Heart right ventricle (tissue), 16 donors: ENCODE measurements at regions of chrX and their contacts with region 1.

Region 1: DNA sequence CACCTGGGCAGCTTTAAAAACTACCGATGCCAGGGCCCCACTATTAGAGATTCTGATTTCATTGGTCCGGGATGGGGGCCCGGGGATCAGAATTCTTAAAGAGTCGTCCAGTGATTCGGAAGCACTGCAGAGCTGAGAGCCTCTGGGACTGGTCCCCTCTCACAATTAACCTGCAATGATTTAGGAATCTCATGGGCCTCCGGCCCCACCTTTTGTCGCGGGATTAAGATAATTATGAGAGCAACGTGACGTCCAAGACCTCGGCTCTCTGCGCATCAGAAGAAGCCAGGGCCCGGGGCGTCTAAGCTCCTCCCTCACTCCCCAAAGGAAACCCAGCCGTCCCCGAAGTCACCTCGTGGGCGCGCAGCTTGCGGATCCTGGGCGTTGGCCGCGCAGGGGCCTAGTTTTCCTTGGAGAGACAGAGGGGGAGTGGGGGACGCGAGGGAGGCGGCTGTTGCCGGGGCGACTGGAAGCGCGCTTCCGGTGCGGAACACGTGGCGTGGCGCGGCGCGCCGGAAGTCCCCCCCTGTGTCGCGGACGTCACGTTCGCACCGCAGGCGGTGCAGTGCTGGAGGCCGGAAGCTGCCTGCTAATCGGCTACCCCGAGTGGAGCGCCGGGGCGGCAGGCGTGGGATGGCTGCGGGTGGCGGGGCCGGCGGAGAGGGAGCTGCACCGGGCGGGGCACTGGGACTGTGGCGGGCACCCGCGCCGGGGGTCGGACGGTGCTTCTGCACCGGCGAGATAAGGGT is at the start of gene GEMIN8:
- DNase-seq: peak; percentile 86
- ATAC-seq: peak; percentile 97 to 99 (median 98)
- H3K4me3 ChIP-seq: peak within 1 kb of the TSS; percentile 50 to 85 (median 72)
- H3K27ac ChIP-seq: peak within 1 kb of the TSS; percentile 55 to 90 (median 84)
- H3K4me1 ChIP-seq: peaks cover 0 to 31% (median 15%) of the 10 kb centered on the region in 9 donors
- H3K27me3 ChIP-seq: peaks cover 0 to 50% (median 0%) of the 10 kb centered on the region in 7 donors
- CTCF ChIP-seq: no peak
- total RNA-seq, gene GEMIN8: 8.2 to 16.7 (median 12.8) TPM

Region 2: GRCh38 chrX:12946838-12947544 is 1082.6 kb before region 1 on chrX:
- intact Hi-C with region 1: loop called in 1 of 10 experiments (anchors 5 kb)
- DNase-seq: peak in 1 of 2 donors; percentile 69
- ATAC-seq: peak; percentile 49 to 86 (median 74)
- H3K4me3 ChIP-seq: no peak overlapping the region
- H3K27ac ChIP-seq: peak overlapping the region in 8 of 10 donors; percentile 15 to 83 (median 64)
- H3K4me1 ChIP-seq: peaks cover 0 to 56% (median 12%) of the 10 kb centered on the region in 9 donors
- H3K27me3 ChIP-seq: peaks cover 0 to 25% (median 0%) of the 10 kb centered on the region in 7 donors
- CTCF ChIP-seq: peak; percentile 64 to 97 (median 84)

Region 3: GRCh38 chrX:13506574-13506973 is 523.0 kb before region 1 on chrX:
- intact Hi-C with region 1: loop called in 9 of 10 experiments (anchors 2 to 10 kb)
- DNase-seq: peak; percentile 18
- ATAC-seq: no peak
- H3K4me3 ChIP-seq: no peak overlapping the region
- H3K27ac ChIP-seq: no peak overlapping the region
- H3K4me1 ChIP-seq: peaks cover 0 to 4% (median 0%) of the 10 kb centered on the region in 9 donors
- H3K27me3 ChIP-seq: peaks cover 0 to 38% (median 0%) of the 10 kb centered on the region in 7 donors
- CTCF ChIP-seq: peak; percentile 54 to 84 (median 71)

Region 4: GRCh38 chrX:13658602-13659001 is 371.0 kb before region 1 on chrX:
- intact Hi-C with region 1: loop called in 8 of 10 experiments (anchors 2 to 10 kb)
- DNase-seq: peak in 1 of 2 donors; percentile 11
- ATAC-seq: peak in 2 of 8 donors; percentile 53 to 67
- H3K4me3 ChIP-seq: no peak overlapping the region
- H3K27ac ChIP-seq: peak overlapping the region in 8 of 10 donors; percentile 9 to 69 (median 40)
- H3K4me1 ChIP-seq: peaks cover 0 to 23% (median 8%) of the 10 kb centered on the region in 9 donors
- H3K27me3 ChIP-seq: peaks cover 0 to 4% (median 0%) of the 10 kb centered on the region in 7 donors
- CTCF ChIP-seq: peak; percentile 37 to 71 (median 69)

Region 5: GRCh38 chrX:13764765-13765164 is 264.8 kb before region 1 on chrX:
- intact Hi-C with region 1: loop called in 2 of 10 experiments (anchors 10 kb)
- DNase-seq: no peak
- ATAC-seq: peak in 6 of 8 donors; percentile 54 to 73 (median 60)
- H3K4me3 ChIP-seq: no peak overlapping the region
- H3K27ac ChIP-seq: peak overlapping the region; percentile 14 to 77 (median 48)
- H3K4me1 ChIP-seq: peaks cover 0 to 40% (median 23%) of the 10 kb centered on the region in 9 donors
- H3K27me3 ChIP-seq: no peaks in the 10 kb centered on the region
- CTCF ChIP-seq: peak in 8 of 9 donors; percentile 6 to 44 (median 30)

Region 6: DNA sequence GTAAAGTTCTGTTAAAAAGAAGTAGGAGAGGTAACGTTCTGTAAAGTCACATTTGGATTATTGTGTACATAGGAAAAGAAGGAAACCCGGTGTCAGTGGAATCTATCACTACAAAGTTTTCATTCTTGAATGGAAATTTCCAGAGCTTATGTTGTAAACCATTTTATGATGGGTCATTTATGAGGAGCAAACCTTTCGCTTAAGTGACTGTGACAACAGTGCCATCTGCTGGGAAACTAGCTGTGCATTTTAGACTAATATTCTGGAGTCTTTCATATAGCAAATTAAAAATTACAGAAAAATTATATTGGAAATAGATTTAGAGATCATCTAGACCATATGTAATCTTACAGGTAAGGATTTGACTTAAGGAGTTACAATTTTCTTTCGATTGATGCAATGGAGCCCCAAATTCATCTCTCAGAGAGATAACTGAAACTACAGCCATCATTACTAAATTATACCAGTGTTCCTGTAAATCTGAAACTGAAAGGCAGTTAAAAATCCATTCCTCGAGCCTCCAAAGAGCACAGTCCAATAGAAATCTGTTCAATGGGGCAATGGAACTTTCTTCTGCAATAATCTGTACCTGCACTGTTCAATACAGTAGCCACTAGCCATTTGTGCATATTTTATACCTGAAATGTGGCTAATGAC is 1213.4 kb after region 1 on chrX:
- intact Hi-C with region 1: loop called in 1 of 10 experiments (anchors 10 kb)
- DNase-seq: peak in 1 of 2 donors; percentile 4
- ATAC-seq: no peak
- H3K4me3 ChIP-seq: no peak overlapping the region
- H3K27ac ChIP-seq: no peak overlapping the region
- H3K4me1 ChIP-seq: no peaks in the 10 kb centered on the region
- H3K27me3 ChIP-seq: peaks cover 0 to 40% (median 0%) of the 10 kb centered on the region in 7 donors
- CTCF ChIP-seq: peak in 8 of 9 donors; percentile 16 to 68 (median 54)